HEK293T (cell line): ENCODE measurements at regions of chr12 and their contacts with region 1.

Region 1: DNA sequence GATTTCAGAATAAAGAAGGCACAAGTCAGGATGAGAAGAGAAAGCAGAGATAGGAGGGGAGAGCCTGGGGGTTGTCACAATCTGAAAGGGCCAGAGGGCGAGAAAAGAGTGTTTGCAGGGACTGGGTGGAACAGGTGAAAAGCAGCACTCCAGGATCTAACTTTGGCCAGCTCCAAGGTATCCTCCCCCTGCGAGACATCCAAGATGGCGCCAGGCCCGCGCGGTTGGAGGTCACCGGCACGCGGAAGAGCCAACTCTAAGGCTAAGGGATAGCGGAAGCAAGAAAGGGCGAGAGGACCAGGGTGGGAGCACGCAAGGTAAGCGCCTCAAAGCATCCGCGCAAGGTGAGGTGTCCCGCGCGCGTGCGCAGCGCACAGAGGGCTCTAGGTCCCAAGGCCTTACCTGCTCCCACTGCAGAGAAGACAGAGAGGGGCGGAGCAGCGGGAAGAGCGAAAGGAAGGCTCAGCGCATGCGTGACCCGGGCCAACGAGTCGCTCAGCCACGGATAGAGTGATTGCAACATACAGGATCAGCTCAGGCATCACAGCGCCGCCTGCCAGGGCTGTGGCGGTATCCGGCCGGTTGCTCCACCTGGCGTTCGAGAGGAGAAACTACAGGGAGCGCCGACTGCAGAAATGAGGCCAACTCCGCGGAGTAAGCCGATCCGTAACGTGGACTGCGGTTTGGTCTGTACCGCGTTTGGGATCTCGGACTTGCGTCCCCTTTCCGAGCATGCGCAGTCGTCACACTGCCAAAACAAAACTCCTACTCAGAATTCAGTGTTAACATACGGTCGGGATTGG is at the start of gene ATP5MC2:
- DNase-seq: peak; percentile 97

Region 2: DNA sequence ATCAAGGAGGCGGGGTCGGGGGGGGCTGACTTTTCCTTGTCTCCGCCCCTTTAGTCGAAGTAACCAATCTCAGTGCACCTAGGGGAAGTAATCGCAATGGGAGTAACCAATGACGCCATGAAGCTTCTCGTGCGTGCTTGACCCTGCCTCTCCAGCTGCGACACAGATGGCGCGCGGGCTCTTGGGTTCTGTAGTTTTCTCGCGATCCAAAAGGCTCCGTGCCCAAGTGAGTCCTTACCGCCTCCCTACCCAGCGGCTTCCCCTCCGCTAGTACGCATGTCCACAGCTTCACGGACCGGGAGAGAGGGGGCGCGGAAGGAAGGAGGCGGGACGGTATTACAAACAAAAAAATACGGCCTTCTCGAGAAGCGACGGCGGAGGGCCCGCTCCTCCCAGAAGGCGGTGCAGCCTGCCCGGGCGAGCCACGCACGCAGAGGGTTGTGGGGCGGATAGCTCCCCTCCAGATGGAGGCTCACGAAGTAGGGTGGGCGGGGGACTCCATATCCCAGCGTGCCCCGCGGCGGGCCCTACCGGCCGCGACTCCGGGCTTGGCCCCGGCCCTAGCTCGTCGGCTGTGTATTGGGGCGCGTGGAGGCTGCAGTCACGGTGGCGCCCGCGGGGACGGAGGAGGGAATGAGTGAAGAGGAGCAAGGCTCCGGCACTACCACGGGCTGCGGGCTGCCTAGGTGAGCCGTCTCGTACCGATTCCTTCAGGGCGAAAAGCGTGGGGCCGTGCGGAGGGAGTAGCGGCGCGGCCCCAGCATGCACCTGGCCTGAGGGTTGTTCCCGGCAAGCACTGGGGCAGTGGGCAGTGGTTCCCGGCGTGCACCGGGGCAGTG is 174.9 kb before region 1 on chr12 and contains the start of gene TARBP2:
- CTCF ChIA-PET with region 1: no interaction called
- POLR2A ChIA-PET with region 1: interaction called, 12 read pairs
- DNase-seq: peak; percentile 92

Region 3: DNA sequence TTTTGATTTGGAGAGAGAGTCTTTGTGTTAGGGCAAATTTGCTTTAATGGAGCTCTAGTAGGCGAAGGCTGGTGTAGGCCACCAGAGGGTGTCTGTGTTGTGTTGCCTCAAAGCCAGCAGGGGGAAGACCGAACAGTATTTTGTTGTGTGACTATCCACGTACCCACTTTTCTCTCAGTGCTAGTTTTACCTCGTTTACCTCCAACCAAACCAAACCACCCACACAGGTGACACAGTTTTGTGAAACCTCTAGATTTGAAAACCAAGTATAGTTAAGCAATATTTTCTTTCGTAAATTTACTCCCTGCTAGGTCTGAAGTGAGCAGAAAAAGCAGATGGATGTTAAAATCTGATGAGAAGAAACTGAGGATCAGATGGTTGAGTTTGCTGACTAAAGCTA is 132.3 kb before region 1 on chr12:
- CTCF ChIA-PET with region 1: interaction called, 9 read pairs
- POLR2A ChIA-PET with region 1: interaction called, 15 read pairs
- DNase-seq: peak; percentile 72

Region 4: GRCh38 chr12:53659011-53659551 is 16.8 kb before region 1 on chr12:
- CTCF ChIA-PET with region 1: interaction called, 3 read pairs
- POLR2A ChIA-PET with region 1: interaction called, 26 read pairs
- DNase-seq: no peak

Region 5: DNA sequence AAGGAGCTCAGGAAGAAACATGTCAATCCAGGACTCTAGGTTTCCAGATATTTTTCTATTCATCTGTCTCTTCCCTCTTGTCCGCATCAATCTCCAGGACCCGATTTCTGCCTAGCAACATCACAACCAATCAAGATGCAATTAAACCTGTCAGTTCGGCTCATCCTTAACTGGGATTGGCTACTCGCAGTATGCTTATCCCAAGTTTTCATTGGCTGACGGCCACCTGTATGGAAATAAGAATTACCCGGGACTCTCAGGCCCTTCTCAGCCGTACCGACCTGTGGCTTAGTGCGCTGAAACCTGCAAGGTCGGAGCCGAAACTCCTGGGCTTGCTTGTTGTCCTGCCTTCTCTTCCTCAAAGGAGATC is 20.4 kb after region 1 on chr12:
- CTCF ChIA-PET with region 1: interaction called, 5 read pairs
- POLR2A ChIA-PET with region 1: interaction called, 129 read pairs
- DNase-seq: peak; percentile 94